ENCODE measurements at regions of chr20 and their contacts with region 1.

Region 1: DNA sequence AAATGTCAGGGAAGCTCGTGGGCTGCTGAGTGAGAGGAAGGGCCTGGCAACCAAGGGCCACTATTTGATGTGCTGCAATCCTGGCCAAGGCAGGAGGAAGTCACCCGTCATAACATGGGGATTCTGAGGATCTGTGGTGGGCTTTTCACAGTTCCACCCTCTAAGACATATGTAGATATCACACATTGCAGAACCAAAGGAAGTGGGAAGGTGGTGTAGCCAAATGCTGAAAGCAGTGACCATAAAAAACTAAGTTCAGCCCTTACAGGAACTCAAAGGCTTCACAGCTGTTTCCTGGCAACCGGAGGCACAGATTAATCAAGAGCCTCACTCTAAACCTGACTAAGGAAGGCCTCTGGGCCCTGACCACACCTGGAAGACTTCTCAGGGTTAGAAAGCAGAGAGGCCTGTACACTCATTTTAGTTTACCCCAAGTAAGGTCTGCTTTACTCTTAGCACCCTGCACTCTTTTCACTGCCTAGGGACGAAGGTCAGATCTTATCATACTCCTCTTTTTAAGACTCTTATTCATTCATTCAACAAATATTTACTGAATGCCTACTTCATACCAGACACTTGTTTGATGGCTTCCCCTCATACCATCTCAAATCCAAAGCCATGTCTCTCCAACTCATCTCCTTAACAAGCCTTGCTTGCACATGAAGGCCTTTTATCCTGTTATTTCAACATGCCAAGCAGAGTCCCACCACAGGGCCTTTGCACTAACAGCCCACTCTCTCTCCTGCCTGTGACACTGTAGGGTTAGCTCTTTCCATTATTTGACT is 2.6 kb downstream of the UBE2V1 start:
- DNase-seq: peak; percentile 81
- H3K4me3 Mint-ChIP-seq: peak overlapping the region; percentile 95
- H3K27ac Mint-ChIP-seq: peak overlapping the region; percentile 95
- H3K4me1 Mint-ChIP-seq: peaks cover 81% of the 10 kb centered on the region
- H3K27me3 Mint-ChIP-seq: no peaks in the 10 kb centered on the region

Region 2: DNA sequence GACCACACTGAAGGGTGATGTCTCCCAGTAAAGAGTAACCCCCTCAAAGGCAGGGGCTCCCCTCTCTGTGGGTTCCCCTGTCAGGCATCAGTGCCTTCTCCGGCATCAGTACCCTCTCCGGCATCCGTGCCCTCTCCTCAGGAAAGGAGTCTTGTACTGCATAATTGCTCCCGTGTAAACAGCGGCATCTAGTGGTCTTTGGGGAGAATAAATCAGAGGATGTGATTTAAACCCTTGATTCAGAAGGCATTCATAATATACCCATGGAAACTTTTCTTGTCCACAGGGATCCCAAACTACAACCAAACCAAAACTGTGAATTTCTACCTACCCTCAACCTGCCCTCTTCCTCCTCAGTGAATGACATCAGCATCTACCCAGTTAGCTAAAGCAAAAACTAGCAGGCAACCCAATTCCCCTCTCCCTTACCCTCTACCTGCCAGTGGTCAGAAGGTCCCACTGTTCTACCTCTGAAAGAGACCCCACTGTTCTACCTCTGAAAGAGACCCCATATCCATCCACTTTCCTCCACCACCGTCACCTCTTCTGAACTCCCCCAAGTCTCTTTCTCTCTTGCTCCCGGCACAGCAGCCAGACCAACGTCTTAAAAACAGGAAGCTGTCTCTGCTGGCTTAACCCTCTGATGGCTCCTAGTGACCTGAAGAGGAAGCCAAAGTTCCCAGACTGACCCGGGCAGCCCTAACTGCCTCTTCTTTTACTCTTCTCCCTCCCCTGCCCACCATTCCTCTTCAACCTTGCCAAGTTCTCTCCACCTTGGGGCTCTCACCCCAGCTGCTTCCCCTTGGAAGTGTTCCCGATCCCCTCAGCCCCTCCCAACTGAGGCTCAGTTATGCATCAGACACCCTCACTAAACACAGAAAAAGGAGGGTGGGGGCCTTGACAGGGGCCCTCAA is 24.6 kb before region 1 on chr20:
- CTCF ChIA-PET with region 1: interaction called, 9 read pairs
- POLR2A ChIA-PET with region 1: no interaction called
- intact Hi-C with region 1: loop called (anchors 2 kb)
- DNase-seq: peak; percentile 36
- H3K4me3 Mint-ChIP-seq: no peak overlapping the region
- H3K27ac Mint-ChIP-seq: peak overlapping the region; percentile 39
- H3K4me1 Mint-ChIP-seq: peaks cover 31% of the 10 kb centered on the region
- H3K27me3 Mint-ChIP-seq: no peaks in the 10 kb centered on the region

Region 3: DNA sequence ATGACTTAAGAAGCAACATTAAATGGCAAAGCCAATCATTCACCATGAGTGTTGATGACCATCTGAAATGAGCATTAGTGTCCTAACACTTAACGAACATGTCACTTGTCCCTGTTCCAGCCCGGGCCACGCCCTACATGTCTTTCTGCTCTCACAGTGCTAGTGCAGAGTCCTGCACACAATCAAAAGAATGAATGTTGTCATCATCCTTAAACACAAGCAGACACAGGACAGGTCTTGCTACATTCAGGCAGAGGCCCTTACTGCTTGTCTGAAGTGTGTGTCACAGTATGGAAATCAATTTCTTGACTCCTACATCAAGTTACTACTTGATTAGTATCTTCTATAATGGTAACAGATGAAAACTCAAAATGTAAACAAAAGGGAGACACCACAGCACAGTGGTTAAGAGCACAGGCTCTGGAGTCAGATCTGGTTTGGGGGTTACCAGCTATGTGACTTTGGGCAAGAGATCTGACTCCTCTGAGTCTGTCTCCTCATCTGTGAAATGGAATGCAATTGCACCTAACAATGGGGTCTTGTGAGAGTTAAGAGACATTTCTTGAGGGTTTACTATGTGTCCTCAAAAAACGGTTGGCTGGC is 14.8 kb before region 1 on chr20:
- CTCF ChIA-PET with region 1: interaction called, 11 read pairs
- POLR2A ChIA-PET with region 1: interaction called, 5 read pairs
- intact Hi-C with region 1: no loop called
- DNase-seq: no peak
- H3K4me3 Mint-ChIP-seq: no peak overlapping the region
- H3K27ac Mint-ChIP-seq: peak overlapping the region; percentile 49
- H3K4me1 Mint-ChIP-seq: peaks cover 32% of the 10 kb centered on the region
- H3K27me3 Mint-ChIP-seq: no peaks in the 10 kb centered on the region

Region 4: DNA sequence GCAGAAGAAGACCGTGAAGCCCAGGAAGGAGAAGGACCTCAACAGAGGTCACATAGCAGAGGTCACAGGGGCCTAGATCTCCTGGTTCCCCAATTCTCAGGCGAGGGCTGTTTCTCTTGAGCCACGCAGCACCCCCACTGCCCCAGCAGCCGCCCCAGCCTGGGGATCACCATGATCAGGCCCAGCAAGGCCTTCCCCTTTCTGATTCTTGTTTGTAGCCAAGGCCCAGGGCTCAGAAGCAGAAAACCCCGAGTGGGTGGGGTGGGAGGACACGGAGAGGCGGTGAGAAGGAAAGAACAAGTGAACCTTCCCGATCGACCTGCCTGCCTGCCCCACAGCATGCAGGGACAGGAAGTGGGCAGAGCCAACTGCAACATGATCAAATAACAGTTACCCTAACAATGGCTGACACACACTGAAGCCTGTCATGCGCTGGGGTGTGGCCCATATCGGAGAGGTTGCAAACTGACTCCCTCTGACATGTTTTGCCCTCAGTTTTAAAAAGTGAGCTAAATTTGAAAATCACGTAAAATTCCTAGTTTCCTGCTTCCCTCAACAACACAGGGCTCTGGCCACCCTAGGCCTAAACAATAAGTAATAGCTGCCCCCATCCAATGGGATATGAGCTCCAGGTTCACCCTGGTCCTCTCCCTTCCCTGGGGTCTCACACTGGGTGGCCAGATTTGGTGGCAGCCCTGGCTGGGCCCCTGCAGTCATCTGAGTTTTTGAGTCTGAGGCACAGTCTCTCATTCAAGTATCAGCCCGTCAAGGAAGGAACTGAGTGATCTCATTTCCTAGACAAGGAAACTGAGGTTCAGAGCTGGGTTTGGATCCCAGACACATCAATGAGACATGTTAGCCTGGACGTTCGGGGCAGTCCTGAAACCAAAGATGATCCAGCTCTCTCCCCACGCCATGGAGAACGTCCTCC is 36.7 kb after region 1 on chr20:
- CTCF ChIA-PET with region 1: interaction called, 18 read pairs
- POLR2A ChIA-PET with region 1: interaction called, 18 read pairs
- intact Hi-C with region 1: loop called (anchors 2 kb)
- DNase-seq: peak; percentile 89
- H3K4me3 Mint-ChIP-seq: peak overlapping the region; percentile 73
- H3K27ac Mint-ChIP-seq: peak overlapping the region; percentile 99
- H3K4me1 Mint-ChIP-seq: peaks cover 67% of the 10 kb centered on the region
- H3K27me3 Mint-ChIP-seq: no peaks in the 10 kb centered on the region

Region 5: GRCh38 chr20:50153485-50154377 is 43.4 kb after region 1 on chr20 and contains the start of gene PEDS1:
- CTCF ChIA-PET with region 1: interaction called, 18 read pairs
- POLR2A ChIA-PET with region 1: interaction called, 18 read pairs
- intact Hi-C with region 1: loop called (anchors 1 kb)
- DNase-seq: peak; percentile 90
- H3K4me3 Mint-ChIP-seq: peak within 1 kb of the TSS; percentile 81
- H3K27ac Mint-ChIP-seq: peak within 1 kb of the TSS; percentile 70
- H3K4me1 Mint-ChIP-seq: peaks cover 43% of the 10 kb centered on the region
- H3K27me3 Mint-ChIP-seq: no peaks in the 10 kb centered on the region
- total RNA-seq, gene PEDS1: 15.0 to 16.9 TPM

Region 6: DNA sequence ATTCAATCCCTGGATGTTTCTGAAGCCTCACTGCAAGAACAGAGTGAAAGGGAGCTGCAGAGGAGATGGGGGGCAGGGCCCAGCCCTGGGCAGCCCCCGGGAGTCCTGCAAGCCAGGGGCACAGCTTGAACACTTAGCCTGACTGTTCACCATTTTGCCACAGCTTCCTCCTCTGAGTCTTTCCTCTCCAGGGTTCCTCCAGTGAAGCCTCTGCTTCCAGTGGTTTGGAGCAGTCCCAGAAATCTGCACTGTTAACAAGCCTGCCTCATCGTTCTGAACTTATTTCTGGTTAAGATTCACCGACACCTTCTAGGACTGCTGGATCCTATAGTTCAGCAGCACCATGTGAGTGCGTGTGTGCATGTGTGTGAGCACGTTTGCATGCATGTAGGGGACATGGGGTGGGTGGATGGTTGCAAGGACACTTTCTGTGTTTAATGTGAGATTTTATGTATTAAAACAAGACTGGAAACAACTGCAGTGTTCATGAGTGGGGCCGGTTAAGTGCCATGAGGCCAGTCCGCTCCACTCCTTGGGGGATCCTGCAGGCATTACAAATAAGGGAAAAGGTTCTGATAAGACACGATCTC is 104.9 kb after region 1 on chr20:
- CTCF ChIA-PET with region 1: no interaction called
- POLR2A ChIA-PET with region 1: no interaction called
- intact Hi-C with region 1: no loop called
- DNase-seq: no peak
- H3K4me3 Mint-ChIP-seq: no peak overlapping the region
- H3K27ac Mint-ChIP-seq: no peak overlapping the region
- H3K4me1 Mint-ChIP-seq: peaks cover 6% of the 10 kb centered on the region
- H3K27me3 Mint-ChIP-seq: peaks cover 15% of the 10 kb centered on the region

Measured in activated CD4-positive, alpha-beta memory T cell treated with anti-CD3 and anti-CD28 coated beads for 36 hours (primary cell).